Mammary epithelial cell (primary cell): ENCODE measurements at regions of chr4 and their contacts with region 1.

Region 1: DNA sequence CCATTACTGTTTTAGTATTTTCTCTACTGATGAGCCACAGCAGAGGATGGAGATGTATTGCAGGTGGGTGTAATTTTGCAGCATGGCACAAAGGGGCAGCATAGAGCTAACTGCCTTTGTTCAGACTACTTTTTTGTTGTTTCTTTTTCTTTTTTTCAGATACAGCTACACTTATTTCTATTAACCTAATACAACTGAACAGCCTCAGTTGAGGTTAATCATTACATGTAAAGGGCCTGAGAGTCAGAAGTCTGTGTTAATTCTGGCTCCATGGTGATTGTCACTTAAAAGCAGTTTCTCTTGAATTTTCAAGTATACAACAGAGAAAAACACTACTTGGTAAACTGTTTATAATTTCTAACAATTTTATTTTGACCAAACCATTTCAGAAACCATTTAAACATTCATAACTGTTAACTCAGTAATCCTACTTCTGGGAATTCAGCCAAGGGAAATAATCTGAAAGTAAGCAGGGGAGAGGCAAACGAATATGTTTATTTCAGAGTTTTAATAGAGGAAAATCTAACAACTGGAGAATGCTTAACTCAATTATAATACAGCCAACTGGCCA is 13.9 kb upstream of the PPEF2 start:
- DNase-seq: peak; percentile 16
- H3K4me3 ChIP-seq: no peak overlapping the region
- H3K27ac ChIP-seq: no peak overlapping the region
- H3K4me1 ChIP-seq: no peaks in the 10 kb centered on the region
- H3K27me3 ChIP-seq: no peaks in the 10 kb centered on the region
- CTCF ChIP-seq: peak; percentile 81 to 86

Region 2: DNA sequence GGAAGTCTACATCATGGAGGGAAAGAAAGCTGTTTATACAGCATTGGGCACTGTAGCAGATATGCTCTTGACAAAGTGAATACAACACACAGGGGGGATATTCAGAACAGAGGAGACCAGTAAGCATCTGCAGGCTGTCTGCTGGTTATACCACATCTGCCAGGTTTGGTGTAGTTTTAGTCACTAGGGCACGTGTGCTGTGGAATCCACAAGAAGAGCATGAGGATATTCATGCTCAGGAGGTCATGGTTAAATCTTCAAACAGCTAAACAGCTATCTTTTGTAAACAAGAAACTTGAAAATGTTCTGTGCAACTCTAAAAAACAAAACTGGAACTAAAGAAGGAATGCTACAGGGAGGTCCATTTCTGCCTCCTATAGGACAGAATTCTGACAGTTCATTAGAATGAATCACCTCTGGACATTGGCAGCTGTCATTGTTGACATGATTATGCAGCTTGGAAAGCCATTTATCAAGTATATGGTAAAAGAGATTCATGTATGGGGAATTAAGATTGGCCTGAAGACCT is 577.8 kb before region 1 on chr4:
- CTCF ChIA-PET with region 1: no interaction called
- dilution Hi-C with region 1: no loop called
- in situ Hi-C with region 1: no loop called
- intact Hi-C with region 1: no loop called
- DNase-seq: no peak
- H3K4me3 ChIP-seq: no peak overlapping the region
- H3K27ac ChIP-seq: no peak overlapping the region
- H3K4me1 ChIP-seq: no peaks in the 10 kb centered on the region
- H3K27me3 ChIP-seq: no peaks in the 10 kb centered on the region
- CTCF ChIP-seq: no peak

Region 3: DNA sequence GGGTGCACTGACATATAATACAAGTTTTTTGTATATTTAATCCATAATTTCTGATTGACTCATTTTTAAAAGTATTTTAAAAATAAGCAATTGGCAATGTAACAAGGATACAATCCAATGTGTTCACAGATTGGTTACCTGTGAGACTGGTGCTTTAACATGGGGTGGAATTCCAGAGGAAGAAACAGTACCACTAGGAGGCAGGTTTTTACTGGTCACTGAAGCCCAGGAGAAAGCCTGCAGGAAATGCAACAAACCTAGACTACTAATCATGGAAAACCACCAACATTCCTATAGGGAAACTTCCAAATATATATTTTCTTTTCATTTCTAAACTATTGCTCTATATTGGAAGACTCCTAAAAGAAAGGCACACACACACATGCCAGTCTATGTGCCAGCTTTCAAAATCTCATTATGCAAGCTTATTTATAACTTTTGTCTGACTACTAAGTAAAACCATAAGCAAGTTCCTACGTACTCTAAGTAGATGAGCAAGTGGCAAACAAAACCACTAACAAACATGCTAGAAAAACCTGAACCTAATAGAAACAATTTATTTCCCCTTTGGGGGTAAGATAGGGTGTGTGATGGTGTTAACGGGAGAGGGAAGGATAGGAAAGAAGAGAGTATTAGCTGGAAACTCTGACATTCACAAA is 262.2 kb before region 1 on chr4:
- CTCF ChIA-PET with region 1: no interaction called
- dilution Hi-C with region 1: no loop called
- in situ Hi-C with region 1: no loop called
- intact Hi-C with region 1: no loop called
- DNase-seq: peak; percentile 46
- H3K4me3 ChIP-seq: no peak overlapping the region
- H3K27ac ChIP-seq: no peak overlapping the region
- H3K4me1 ChIP-seq: peaks cover 3% of the 10 kb centered on the region
- H3K27me3 ChIP-seq: no peaks in the 10 kb centered on the region
- CTCF ChIP-seq: peak; percentile 56 to 70

Region 4: DNA sequence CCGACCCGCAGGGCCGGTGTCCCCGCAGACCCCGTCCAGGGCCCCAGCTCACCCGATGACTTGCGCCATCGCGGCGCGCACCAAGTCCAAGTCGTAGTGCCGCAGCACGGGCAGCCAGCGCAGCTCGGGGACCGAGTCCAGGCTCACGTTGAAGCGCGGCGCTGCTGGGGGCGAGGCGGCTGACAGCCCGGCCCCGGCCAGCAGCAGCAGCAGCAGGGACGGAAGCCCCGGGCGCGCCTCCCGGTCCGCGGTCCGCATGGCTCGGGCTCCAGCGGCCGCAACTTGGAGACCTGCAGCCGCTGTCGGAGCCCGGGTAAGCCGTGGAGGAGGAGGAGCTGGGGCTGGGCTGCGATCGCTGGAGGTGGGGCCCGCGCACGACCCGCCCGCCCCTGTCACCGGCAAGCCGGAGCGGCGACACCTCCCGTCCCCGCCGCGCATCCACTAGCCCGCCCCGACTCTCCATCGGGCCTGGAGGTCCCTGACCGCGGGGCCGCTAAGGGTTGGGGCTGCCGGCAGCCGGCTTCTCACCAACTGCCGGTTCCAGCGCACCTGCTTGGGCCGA is 24.6 kb after region 1 on chr4 and contains the start of gene NAAA:
- CTCF ChIA-PET with region 1: interaction called, 6 read pairs
- dilution Hi-C with region 1: no loop called
- in situ Hi-C with region 1: no loop called
- intact Hi-C with region 1: loop called (anchors 1 kb)
- DNase-seq: peak; percentile 53
- H3K4me3 ChIP-seq: peak within 1 kb of the TSS; percentile 61 to 73 (median 71)
- H3K27ac ChIP-seq: peak within 1 kb of the TSS; percentile 15
- H3K4me1 ChIP-seq: peaks cover 7% of the 10 kb centered on the region
- H3K27me3 ChIP-seq: no peaks in the 10 kb centered on the region
- CTCF ChIP-seq: no peak
- total RNA-seq, gene NAAA: 16.1 to 21.3 TPM

Region 5: DNA sequence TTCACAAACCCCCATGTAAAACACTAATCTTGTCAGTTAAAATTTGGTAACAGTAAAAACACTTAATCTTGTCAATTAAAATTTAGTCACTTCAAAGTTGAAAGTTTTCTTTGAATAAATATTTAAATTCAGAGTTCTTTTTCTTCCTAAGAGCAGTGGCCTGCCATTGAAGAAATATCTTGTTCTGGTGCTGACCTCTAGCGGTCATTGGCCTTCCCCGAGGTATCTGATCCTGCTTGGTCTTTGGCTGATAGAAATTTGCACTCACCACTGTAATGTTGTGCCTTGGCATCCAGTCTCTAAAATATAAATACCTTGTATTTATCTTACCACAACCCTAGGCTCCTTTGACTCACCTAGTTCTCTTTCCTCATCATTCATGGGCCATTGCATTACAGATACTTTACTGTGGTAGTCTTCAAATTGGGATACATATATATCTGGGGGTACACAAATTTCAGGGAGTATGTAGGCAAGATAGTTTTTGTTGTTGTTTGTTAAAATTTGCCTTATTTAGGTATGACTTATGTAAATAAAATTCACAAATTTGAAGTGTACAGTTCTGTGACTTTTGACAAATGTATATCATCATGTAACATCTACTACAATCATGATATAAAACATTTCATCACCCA is 151.6 kb after region 1 on chr4:
- CTCF ChIA-PET with region 1: no interaction called
- dilution Hi-C with region 1: no loop called
- in situ Hi-C with region 1: no loop called
- intact Hi-C with region 1: loop called (anchors 1 kb)
- DNase-seq: peak; percentile 55
- H3K4me3 ChIP-seq: no peak overlapping the region
- H3K27ac ChIP-seq: no peak overlapping the region
- H3K4me1 ChIP-seq: peaks cover 4% of the 10 kb centered on the region
- H3K27me3 ChIP-seq: no peaks in the 10 kb centered on the region
- CTCF ChIP-seq: peak; percentile 78 to 87

Region 6: DNA sequence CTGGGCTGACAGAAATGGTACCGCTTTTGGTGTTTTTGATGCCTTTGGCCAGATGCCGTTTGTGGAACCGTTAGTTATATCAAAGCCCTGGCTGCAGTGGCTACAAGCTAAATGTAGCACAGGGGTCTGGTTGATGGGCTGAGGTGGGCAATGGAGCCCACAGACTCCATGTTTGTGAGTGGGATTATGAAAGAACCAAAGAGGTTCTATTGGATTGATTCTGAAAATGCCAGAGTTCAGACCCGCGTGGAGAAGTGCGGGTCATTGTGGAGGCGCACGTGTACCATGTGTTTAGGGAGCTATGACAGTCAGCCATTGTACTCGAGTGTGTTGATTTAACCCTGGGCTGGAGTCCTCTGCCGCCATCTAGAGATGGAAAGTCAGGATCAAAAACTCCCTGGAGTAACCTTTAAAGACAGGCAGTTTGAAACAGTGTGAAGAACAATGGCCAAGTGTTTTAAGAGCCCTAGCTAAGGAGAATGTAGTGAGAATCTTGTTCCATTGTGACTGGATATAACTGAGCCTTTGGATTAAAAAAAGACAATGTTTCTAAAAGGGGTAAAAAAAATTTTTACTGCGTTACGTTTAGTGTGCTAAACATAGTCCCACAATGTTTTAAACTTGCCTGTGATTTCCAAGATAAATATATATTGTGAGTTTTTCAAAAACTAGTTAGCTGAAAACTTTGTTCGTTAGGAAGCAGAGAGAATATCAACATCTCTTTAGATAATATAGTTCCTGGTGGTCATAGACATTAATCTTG is 171.0 kb after region 1 on chr4:
- CTCF ChIA-PET with region 1: interaction called, 5 read pairs
- dilution Hi-C with region 1: no loop called
- in situ Hi-C with region 1: no loop called
- intact Hi-C with region 1: loop called (anchors 5 kb)
- DNase-seq: peak; percentile 82
- H3K4me3 ChIP-seq: no peak overlapping the region
- H3K27ac ChIP-seq: no peak overlapping the region
- H3K4me1 ChIP-seq: peaks cover 21% of the 10 kb centered on the region
- H3K27me3 ChIP-seq: no peaks in the 10 kb centered on the region
- CTCF ChIP-seq: peak; percentile 76 to 82